ENCODE measurements at regions of chr6 and their contacts with region 1.

Region 1: DNA sequence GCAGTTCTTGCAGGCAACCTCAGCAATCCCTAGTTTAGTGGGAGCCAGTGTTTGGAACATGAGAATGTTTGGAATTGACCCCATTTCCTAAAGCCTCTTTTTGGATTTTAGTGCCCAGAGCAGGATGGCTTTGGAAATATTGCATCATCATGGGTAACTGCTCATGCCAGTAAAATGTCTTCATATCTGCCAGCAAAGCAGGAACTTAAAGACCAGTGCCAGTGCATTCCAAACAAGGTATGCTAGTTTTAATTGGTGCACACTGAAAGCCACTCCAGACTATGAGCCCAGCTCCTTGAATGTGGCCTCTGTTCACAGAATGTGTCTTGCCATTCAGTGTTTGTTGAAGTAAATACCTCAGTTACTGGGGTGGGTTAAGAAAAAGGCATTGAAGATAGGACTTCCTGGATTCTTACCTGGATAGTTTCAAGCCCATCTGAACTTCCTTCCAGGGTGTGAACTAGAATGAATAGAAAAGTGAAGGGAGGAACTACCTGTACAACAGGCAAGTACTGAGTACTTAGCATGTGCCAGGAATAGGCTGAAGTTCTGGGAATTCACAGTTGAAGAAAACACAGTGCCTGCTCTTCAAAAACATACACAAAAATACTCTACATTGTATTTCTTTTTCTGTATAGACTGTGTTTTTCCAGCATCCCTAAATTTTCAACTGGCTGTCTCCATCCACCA is 70.5 kb downstream of the COL19A1 start:
- DNase-seq: no peak
- ATAC-seq: no peak
- H3K4me3 ChIP-seq: no peak overlapping the region
- H3K27ac ChIP-seq: peak overlapping the region in 1 of 2 donors; percentile 71
- H3K4me1 ChIP-seq: no peaks in the 10 kb centered on the region
- H3K27me3 ChIP-seq: no peaks in the 10 kb centered on the region

Region 2: GRCh38 chr6:69796642-69797390 is 140.0 kb before region 1 on chr6 and contains the start of gene LMBRD1:
- intact Hi-C with region 1: loop called in 1 of 2 experiments (anchors 5 kb)
- DNase-seq: peak; percentile 98 to 99
- ATAC-seq: peak; percentile 97
- H3K4me3 ChIP-seq: peak within 1 kb of the TSS; percentile 53 to 91
- H3K27ac ChIP-seq: peak within 1 kb of the TSS; percentile 84 to 99
- H3K4me1 ChIP-seq: peaks cover 2 to 3% of the 10 kb centered on the region in 2 donors
- H3K27me3 ChIP-seq: no peaks in the 10 kb centered on the region
- total RNA-seq, gene LMBRD1: 46.3 to 53.1 TPM

Region 3: GRCh38 chr6:69835414-69836179 is 101.2 kb before region 1 on chr6:
- intact Hi-C with region 1: no loop called
- DNase-seq: no peak
- ATAC-seq: peak; percentile 78
- H3K4me3 ChIP-seq: no peak overlapping the region
- H3K27ac ChIP-seq: no peak overlapping the region
- H3K4me1 ChIP-seq: no peaks in the 10 kb centered on the region
- H3K27me3 ChIP-seq: no peaks in the 10 kb centered on the region

Region 4: DNA sequence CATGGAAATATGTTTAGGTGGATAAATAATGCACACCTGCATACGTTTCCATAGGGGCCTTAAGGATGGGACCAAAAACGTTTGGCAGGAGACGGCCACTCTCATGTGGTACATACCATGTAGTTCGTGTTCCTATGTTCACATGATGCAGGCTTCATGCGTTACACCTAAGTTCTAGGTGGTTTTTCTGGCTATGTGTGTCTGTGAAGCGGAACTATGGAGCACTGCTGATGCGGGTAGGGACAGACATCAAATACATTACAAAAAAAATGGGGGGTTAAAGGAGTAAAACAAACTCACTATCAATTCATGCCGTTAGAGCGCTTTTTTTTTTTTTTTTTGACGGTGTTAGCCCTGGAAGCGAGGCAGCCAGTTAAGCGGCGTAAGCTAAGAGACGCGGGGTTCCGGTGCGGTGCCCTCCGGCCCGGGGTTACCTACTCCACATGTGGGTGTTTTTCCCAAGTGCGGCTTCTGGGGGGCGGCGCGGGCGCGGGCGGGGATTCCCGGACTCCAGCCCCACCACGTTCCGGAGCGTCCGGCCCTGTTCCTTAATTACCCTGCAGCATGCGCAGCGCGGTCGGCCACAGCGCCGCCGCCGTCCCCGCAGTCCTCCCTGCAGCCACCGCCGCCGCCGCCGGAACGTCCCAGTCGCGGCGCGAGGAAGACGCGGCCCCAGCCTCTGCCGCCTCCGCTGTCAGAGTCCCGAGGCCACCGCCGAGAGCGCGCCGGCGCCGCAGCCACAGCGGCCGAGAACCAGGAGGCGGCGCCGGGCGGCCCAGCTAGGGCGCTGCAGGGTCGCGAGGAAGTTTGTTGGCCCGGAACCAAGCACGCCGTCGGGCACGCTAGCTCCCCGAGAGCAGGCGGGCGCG is 69.8 kb before region 1 on chr6:
- intact Hi-C with region 1: loop called in 1 of 2 experiments (anchors 5 kb)
- DNase-seq: peak; percentile 75 to 90
- ATAC-seq: peak; percentile 79
- H3K4me3 ChIP-seq: peak overlapping the region; percentile 42 to 74
- H3K27ac ChIP-seq: no peak overlapping the region
- H3K4me1 ChIP-seq: no peaks in the 10 kb centered on the region
- H3K27me3 ChIP-seq: no peaks in the 10 kb centered on the region